ENCODE measurements at regions of chr13 and their contacts with region 1.

Region 1: GRCh38 chr13:33931397-33932311 is 113.7 kb downstream of the RFC3 start:
- DNase-seq: peak in 1 of 2 donors; percentile 75
- H3K4me3 ChIP-seq: no peak overlapping the region
- H3K27ac ChIP-seq: no peak overlapping the region
- H3K4me1 ChIP-seq: no peaks in the 10 kb centered on the region
- H3K27me3 ChIP-seq: no peaks in the 10 kb centered on the region
- CTCF ChIP-seq: peak in 3 of 7 experiments; percentile 44 to 57 (median 50)
- EP300 ChIP-seq: no peak
- POLR2A ChIP-seq: no peak

Region 2: GRCh38 chr13:35157143-35157755 is 1225.6 kb after region 1 on chr13:
- intact Hi-C with region 1: loop called (anchors 10 kb)
- DNase-seq: peak in 1 of 2 donors; percentile 86
- H3K4me3 ChIP-seq: no peak overlapping the region
- H3K27ac ChIP-seq: no peak overlapping the region
- H3K4me1 ChIP-seq: peaks cover 0 to 14% (median under 1%) of the 10 kb centered on the region in 4 donors
- H3K27me3 ChIP-seq: no peaks in the 10 kb centered on the region
- CTCF ChIP-seq: peak in 5 of 7 experiments; percentile 17 to 60 (median 51)
- EP300 ChIP-seq: no peak
- POLR2A ChIP-seq: no peak

Measured in stomach (tissue), 19 donors.